ENCODE measurements at regions of chr19 and their contacts with region 1.

Region 1: DNA sequence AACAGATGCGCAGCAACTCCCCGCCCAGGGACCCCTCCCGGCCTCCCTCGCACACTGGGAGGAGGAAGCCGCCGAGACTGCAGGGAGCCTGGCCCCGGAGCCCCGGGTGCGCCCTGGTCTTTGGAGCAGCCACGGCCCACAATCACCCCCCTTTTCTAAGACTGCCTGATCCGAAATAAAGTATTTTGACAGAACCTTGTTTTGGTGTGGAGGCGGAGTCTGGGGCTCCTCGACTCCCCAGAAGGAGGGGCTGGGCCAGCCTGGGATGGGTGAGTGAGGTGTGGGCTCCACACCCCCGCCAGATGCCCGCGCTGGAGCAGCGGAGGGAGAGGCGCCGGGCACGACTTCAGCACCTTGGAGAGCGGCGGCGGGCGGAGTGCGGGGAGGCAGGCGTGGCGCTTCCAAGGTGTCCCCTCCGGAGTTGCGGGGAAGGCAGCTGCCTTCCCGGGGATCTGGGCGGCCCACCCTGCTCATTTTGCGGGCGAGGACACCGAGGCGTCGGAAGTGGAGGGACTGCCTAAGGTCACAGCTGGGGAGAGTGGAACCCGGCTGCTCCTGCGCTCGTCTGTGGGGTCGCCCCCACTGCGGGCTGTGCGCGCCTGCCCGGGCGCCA is 9.4 kb downstream of the SIRT6 start:
- DNase-seq: no peak
- ATAC-seq: peak; percentile 81
- H3K4me3 ChIP-seq: no peak overlapping the region
- H3K27ac ChIP-seq: no peak overlapping the region
- H3K4me1 ChIP-seq: no peaks in the 10 kb centered on the region
- H3K27me3 ChIP-seq: no peaks in the 10 kb centered on the region
- CTCF ChIP-seq: no peak
- EP300 ChIP-seq: no peak
- POLR2A ChIP-seq: peak; percentile 39; the same call in 1 of the 2 replicates
- RAD21 ChIP-seq: no peak

Region 2: GRCh38 chr19:4154571-4155312 is 18.2 kb before region 1 on chr19:
- CTCF ChIA-PET with region 1: interaction called, 3 read pairs
- POLR2A ChIA-PET with region 1: interaction called, 10 read pairs
- RAD21 ChIA-PET with region 1: no interaction called
- SMC1A ChIA-PET with region 1: no interaction called
- in situ Hi-C with region 1: no loop called
- intact Hi-C with region 1: no loop called
- DNase-seq: no peak
- ATAC-seq: no peak
- H3K4me3 ChIP-seq: no peak overlapping the region
- H3K27ac ChIP-seq: no peak overlapping the region
- H3K4me1 ChIP-seq: 0 out of 2 replicates have a peak, but pooled peaks cover 2% of the 10 kb centered on the region
- H3K27me3 ChIP-seq: peaks cover 0 to 1% of the 10 kb centered on the region in 2 experiments; a peak in 1 of 4 replicates
- CTCF ChIP-seq: no peak
- EP300 ChIP-seq: no peak
- POLR2A ChIP-seq: no peak
- RAD21 ChIP-seq: no peak